T-cell (primary cell): ENCODE measurements at regions of chr22 and their contacts with region 1.

Region 1: GRCh38 chr22:19476023-19476422 is 3.0 kb downstream of the UFD1 start:
- DNase-seq: no peak
- ATAC-seq: no peak
- H3K4me3 ChIP-seq: no peak overlapping the region
- H3K4me3 Mint-ChIP-seq: no peak overlapping the region
- H3K27ac ChIP-seq: no peak overlapping the region
- H3K27ac Mint-ChIP-seq: no peak overlapping the region
- H3K4me1 ChIP-seq: peaks cover 11 to 13% of the 10 kb centered on the region in 2 experiments
- H3K4me1 Mint-ChIP-seq: peaks cover 33 to 43% (median 38%) of the 10 kb centered on the region in 3 donors
- H3K27me3 ChIP-seq: no peaks in the 10 kb centered on the region
- H3K27me3 Mint-ChIP-seq: no peaks in the 10 kb centered on the region

Region 2: GRCh38 chr22:19376247-19376646 is 99.8 kb before region 1 on chr22:
- CTCF ChIA-PET with region 1: no interaction called
- POLR2A ChIA-PET with region 1: interaction called in 1 of 2 experiments, 11 read pairs
- DNase-seq: no peak
- ATAC-seq: no peak
- H3K4me3 ChIP-seq: no peak overlapping the region
- H3K4me3 Mint-ChIP-seq: no peak overlapping the region
- H3K27ac ChIP-seq: no peak overlapping the region
- H3K27ac Mint-ChIP-seq: no peak overlapping the region
- H3K4me1 ChIP-seq: no peaks in the 10 kb centered on the region
- H3K4me1 Mint-ChIP-seq: no peaks in the 10 kb centered on the region
- H3K27me3 ChIP-seq: no peaks in the 10 kb centered on the region
- H3K27me3 Mint-ChIP-seq: no peaks in the 10 kb centered on the region